Mammary epithelial cell (primary cell): ENCODE measurements at regions of chr17 and their contacts with region 1.

Region 1: GRCh38 chr17:50904521-50905459 is 38.6 kb upstream of the TOB1 start:
- DNase-seq: no peak
- H3K4me3 ChIP-seq: no peak overlapping the region
- H3K27ac ChIP-seq: peak overlapping the region; percentile 90
- H3K4me1 ChIP-seq: peaks cover 50% of the 10 kb centered on the region
- H3K27me3 ChIP-seq: no peaks in the 10 kb centered on the region
- CTCF ChIP-seq: no peak

Region 2: GRCh38 chr17:50668025-50668837 is 236.6 kb before region 1 on chr17:
- CTCF ChIA-PET with region 1: interaction called, 33 read pairs
- dilution Hi-C with region 1: no loop called
- in situ Hi-C with region 1: no loop called
- intact Hi-C with region 1: no loop called
- DNase-seq: no peak
- H3K4me3 ChIP-seq: no peak overlapping the region
- H3K27ac ChIP-seq: no peak overlapping the region
- H3K4me1 ChIP-seq: peaks cover 34% of the 10 kb centered on the region
- H3K27me3 ChIP-seq: no peaks in the 10 kb centered on the region
- CTCF ChIP-seq: no peak

Region 3: DNA sequence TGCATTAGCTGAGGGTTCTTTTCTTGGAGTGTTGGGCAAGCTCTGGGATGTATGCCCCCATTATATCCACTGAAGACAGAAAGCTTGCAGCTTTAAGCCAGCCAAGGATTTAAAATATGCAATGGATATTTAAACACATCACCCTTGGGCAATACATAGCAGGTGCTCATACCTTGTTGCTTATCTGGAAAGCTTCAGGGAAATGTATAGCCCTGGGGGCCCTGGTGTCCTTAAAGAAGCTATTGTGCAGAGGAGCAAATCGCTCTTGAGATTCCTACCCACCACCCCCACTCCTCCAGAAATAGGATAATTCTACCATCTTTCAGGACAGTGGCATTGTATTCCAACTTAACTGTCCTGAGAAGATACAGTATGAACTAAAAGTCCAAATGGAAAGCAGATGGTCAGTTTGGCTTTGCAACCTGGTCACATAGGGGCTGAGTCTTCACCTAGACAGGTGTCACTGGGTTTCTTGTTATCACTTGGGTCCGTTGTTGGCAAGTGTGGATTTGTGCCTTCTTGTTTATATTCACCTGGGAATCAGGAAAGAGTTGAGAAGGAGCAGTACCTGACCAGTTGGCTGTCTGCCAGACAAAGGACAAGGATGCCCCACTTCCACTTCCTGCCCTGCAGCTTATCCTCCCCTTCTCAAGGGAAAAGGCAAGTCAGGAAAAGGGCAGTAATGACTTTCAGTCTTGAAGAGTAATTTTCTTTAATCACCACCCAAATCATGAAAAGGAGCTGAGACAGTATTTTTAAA is 140.9 kb before region 1 on chr17:
- CTCF ChIA-PET with region 1: no interaction called
- dilution Hi-C with region 1: no loop called
- in situ Hi-C with region 1: no loop called
- intact Hi-C with region 1: no loop called
- DNase-seq: no peak
- H3K4me3 ChIP-seq: no peak overlapping the region
- H3K27ac ChIP-seq: no peak overlapping the region
- H3K4me1 ChIP-seq: peaks cover 20% of the 10 kb centered on the region
- H3K27me3 ChIP-seq: no peaks in the 10 kb centered on the region
- CTCF ChIP-seq: no peak

Region 4: GRCh38 chr17:50893183-50893993 is 11.4 kb before region 1 on chr17:
- CTCF ChIA-PET with region 1: interaction called, 4 read pairs
- dilution Hi-C with region 1: no loop called
- in situ Hi-C with region 1: no loop called
- intact Hi-C with region 1: loop called (anchors 1 kb)
- DNase-seq: peak; percentile 99
- H3K4me3 ChIP-seq: peak overlapping the region in 1 of 3 experiments; percentile 26
- H3K27ac ChIP-seq: peak overlapping the region; percentile 98
- H3K4me1 ChIP-seq: peaks cover 33% of the 10 kb centered on the region
- H3K27me3 ChIP-seq: no peaks in the 10 kb centered on the region
- CTCF ChIP-seq: no peak

Region 5: DNA sequence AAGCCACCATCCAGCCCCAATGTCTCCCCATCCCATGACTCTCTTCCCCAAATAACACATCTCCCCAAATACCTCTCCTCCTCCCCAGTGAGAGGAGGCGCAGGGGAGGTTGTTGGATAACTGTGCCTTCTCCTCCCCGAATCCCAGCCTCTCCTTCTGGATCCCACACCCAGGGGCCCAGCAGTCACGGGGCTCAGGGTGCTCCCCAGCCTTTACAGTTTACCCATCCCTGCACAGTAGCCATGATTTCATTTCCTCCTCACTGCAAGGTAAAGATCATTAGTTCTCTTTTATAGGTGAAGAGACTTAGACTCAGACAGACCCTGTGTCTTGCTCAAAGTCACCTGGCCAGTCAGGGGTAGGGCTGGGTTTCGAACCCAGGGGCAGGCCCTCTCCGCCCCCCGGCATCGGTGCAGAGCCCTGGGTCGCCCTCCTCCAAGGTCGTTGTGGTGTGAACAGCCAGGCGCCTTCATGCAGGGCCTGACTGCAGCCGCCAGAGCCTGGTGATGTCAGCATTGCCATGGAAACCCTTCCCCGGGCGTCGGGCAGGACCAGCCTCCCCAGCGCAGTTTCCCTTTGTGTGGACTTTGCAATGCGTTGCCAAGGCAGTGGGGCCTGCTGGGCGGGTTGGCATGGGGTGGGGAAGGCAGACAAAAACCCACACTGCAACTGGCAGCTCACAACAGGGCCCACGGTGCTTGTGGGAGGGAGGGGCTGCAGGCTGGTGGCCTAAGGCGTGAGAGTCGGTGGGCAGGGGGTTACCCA is 14.7 kb after region 1 on chr17:
- CTCF ChIA-PET with region 1: no interaction called
- dilution Hi-C with region 1: no loop called
- in situ Hi-C with region 1: no loop called
- intact Hi-C with region 1: loop called (anchors 2 kb)
- DNase-seq: peak; percentile 91
- H3K4me3 ChIP-seq: no peak overlapping the region
- H3K27ac ChIP-seq: peak overlapping the region; percentile 83
- H3K4me1 ChIP-seq: peaks cover 57% of the 10 kb centered on the region
- H3K27me3 ChIP-seq: no peaks in the 10 kb centered on the region
- CTCF ChIP-seq: no peak